Posterior cingulate gyrus (tissue), 11 donors: ENCODE measurements at regions of chr1 and their contacts with region 1.

Region 1: DNA sequence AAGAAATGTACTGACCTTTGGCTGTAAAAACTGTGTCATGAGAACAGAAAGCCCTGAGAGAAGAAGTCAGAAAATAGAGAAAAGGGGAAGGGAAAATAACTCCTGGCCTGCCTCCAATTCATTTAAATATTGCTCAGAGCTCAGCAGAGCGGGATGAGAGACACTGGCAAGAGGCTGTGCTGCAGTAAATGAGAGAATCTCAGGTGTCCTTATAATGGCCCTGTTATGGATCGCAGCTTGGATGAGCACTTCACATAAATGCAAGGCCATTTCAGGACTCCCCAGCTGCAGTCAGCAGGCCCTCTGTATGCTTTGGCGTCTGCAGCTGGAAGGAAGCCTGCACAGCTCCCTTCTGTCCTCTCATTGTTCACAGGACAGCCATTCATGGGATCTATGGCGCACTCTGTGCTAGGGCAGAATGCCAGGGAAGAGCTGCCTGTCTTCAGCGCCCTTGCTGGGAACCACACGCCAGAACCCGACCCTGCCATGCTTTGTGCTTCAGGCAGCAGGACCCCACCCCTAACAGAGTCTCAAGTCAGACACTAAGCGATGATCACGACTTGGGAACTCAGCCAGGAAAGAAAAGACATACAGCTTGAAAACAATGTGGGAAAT is 20.7 kb upstream of the ABCB10 start:
- DNase-seq: peak; percentile 72 to 98 (median 86)

Region 2: GRCh38 chr1:229625915-229626831 is 47.0 kb after region 1 on chr1 and contains the starts of genes TAF5L and URB2:
- intact Hi-C with region 1: loop called (anchors 5 kb)
- DNase-seq: peak; percentile 76 to 99 (median 88)

Region 3: DNA sequence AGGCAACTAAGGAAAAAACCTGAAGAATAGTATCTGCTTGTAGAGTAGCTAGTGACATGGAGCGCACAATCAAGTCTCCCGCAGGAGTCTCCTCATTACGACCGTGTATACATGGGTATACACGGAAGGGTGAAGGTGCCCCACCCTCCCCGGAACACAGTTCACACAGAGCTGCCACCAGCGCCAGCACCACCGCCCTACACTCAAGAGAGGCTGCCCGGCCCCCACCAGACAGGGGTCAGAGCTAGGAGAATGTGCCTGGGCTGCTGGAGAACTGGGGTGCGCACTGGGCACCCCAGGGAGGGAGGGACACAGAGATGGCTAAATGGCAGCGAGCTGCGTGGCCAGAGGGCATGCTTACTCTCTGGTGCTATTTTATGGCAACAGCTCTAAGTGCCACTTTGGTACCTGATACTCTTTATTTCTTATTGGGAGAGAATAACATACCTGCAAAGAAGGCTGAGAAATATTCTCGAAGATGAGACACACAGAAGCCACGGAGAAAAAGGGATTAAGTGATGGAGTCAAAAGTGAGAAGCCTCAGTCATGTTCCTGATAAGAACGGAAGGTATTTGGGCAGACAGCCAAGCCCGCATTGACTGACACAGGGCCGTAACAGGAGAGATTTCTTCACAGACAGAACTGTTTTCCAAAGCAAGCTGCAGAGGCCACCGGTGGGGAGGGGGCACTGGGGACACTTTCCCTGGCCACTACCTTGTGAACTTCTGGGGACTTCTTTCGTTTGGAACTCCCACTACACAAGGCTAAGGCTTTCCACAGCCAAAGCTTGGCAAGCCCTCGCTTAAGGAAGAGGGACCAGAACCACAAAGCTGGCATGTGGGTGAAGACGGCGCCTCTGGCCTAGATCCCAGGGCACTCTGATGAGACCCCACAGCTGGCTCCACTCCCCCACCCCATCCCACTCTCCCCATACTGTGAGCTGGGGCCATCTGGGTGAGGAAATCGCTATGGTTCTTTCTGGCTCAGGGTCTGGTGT is 739.0 kb after region 1 on chr1:
- intact Hi-C with region 1: no loop called
- DNase-seq: peak in 1 of 10 donors; percentile 77